Heart left ventricle (tissue), 16 donors: ENCODE measurements at regions of chr2 and their contacts with region 1.

Region 1: DNA sequence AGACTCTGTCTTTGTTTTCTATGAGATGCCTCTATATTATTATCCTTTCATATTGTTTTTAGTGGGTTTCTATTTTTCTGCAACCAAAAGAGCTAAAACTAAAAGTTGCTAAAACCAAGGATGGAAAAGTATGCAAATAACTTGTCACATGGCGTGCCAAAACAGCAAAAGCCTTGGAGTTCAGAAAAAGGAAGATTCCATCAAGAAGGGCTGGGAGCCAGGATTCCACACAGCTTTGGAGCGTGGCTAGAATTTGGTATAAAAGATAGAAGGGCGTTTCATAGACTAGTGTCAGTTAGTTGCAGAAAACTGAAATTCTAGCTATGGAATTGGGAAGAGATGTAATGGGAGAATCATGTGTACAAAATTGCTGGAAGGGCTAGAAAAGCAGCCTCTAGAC is 4.1 kb downstream of the SCYGR1 start:
- DNase-seq: no peak
- ATAC-seq: no peak
- H3K4me3 ChIP-seq: no peak overlapping the region
- H3K27ac ChIP-seq: no peak overlapping the region
- H3K4me1 ChIP-seq: peaks cover 0 to 10% (median 0%) of the 10 kb centered on the region in 12 donors
- H3K27me3 ChIP-seq: peaks cover 0 to 12% (median 0%) of the 10 kb centered on the region in 9 donors
- CTCF ChIP-seq: no peak
- POLR2A ChIP-seq: no peak

Region 2: DNA sequence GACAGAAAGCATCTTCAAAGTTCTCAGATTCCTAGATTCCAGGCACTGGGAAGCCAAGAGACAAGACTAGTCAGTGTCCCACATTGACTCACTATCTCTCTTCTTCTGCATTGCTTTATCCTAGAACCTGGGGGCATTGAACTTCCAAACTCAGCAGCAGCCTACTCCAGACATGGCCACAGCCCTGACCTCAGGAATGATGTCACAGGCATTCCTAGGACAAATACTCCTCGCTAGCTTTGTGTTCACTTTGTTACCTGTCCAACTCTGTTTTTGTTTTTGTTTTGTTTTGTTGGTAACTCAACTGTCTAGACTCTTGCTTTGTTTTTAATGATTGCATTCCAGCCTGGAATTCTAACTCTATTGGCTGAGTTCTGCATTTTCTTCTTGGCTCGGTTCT is 1247.1 kb after region 1 on chr2:
- intact Hi-C with region 1: loop called in 1 of 10 experiments (anchors 5 kb)
- DNase-seq: no peak
- ATAC-seq: no peak
- H3K4me3 ChIP-seq: no peak overlapping the region
- H3K27ac ChIP-seq: no peak overlapping the region
- H3K4me1 ChIP-seq: no peaks in the 10 kb centered on the region
- H3K27me3 ChIP-seq: no peaks in the 10 kb centered on the region
- CTCF ChIP-seq: no peak
- POLR2A ChIP-seq: no peak